ENCODE measurements at regions of chr3 and their contacts with region 1.

Region 1: GRCh38 chr3:179653096-179653797 is 407 bp downstream of the USP13 start:
- DNase-seq: peak; percentile 78 to 87
- ATAC-seq: peak; percentile 65 to 69
- H3K4me3 ChIP-seq: peak overlapping the region; percentile 77 to 98 (median 87)
- H3K27ac ChIP-seq: peak overlapping the region; percentile 90 to 98 (median 96)
- H3K4me1 ChIP-seq: peaks cover 22 to 25% of the 10 kb centered on the region in 2 donors
- H3K27me3 ChIP-seq: no peaks in the 10 kb centered on the region
- CTCF ChIP-seq: no peak
- POLR2A ChIP-seq: peak; percentile 52 to 58

Region 2: DNA sequence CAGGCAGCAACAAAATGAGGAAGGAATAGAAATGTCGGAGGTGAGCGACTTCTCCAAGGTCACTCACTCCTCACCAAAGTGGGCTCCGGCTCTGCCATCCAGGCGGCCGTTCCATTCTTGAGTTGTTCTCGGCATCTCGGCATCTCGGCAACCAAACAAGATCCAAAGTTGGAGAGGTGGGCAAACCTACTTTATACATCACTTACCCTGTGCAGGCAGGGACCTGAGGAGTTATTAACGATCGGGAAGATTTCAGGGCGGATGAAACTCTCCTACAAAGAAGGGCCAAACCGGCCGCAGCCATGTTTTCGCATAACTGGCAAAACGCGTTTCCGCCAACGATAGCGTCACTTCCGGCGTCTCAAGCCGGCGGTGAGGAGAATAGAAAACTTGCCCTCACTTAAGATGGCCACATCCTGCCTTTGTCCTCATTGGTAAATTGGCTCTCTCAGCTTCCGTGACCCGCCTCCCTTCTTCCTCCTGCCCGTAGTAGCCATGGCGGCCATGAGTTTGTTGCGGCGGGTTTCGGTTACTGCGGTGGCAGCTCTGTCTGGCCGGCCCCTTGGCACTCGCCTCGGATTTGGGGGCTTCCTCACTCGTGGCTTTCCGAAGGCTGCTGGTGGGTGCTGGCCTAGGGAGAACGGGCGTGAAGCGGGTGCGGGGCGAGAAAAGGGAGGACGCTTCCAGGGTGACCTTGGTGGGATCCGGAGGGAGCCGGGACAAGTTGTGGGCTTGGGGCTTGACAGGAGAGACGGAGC is 48.7 kb before region 1 on chr3 and contains the starts of genes MRPL47 and NDUFB5:
- in situ Hi-C with region 1: no loop called
- intact Hi-C with region 1: loop called (anchors 2 kb)
- DNase-seq: peak; percentile 93 to 94
- ATAC-seq: peak; percentile 100
- H3K4me3 ChIP-seq: peak within 1 kb of the TSS; percentile 84 to 94 (median 88)
- H3K27ac ChIP-seq: peak within 1 kb of the TSS; percentile 90 to 97 (median 92)
- H3K4me1 ChIP-seq: peaks cover 30 to 40% of the 10 kb centered on the region in 2 donors
- H3K27me3 ChIP-seq: no peaks in the 10 kb centered on the region
- CTCF ChIP-seq: no peak
- POLR2A ChIP-seq: peak; percentile 80 to 88
- total RNA-seq, gene MRPL47: 34.9 to 74.0 (median 41.2) TPM
- total RNA-seq, gene NDUFB5: 127 to 348 (median 179) TPM

Region 3: DNA sequence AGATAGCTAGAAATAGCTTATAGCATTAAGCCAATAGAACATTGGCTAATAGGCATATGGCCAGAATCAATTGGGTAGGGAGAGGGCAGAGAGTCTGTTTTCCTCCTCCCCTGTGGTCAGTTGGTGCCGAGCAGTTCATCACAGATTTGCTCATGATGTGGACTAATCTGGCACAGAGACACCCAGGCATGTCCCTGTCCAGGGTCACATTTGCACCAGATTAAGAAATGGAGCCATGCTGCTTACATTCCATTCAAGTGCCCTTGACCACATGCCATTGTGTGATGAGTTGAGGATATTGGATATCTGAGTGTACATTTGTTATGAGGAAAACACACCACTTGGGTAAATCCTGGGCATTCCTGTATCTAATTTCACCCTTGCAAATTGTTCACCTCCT is 53.0 kb after region 1 on chr3:
- in situ Hi-C with region 1: no loop called
- intact Hi-C with region 1: loop called (anchors 2 kb)
- DNase-seq: peak; percentile 84 to 87
- ATAC-seq: peak; percentile 91 to 93
- H3K4me3 ChIP-seq: no peak overlapping the region
- H3K27ac ChIP-seq: peak overlapping the region; percentile 85 to 90 (median 86)
- H3K4me1 ChIP-seq: peaks cover 65 to 77% of the 10 kb centered on the region in 2 donors
- H3K27me3 ChIP-seq: no peaks in the 10 kb centered on the region
- CTCF ChIP-seq: peak in 1 of 5 experiments; percentile 17
- POLR2A ChIP-seq: no peak

Region 4: GRCh38 chr3:179732661-179733348 is 79.6 kb after region 1 on chr3:
- in situ Hi-C with region 1: no loop called
- intact Hi-C with region 1: loop called (anchors 1 kb)
- DNase-seq: peak; percentile 84 to 94
- ATAC-seq: peak; percentile 56 to 64
- H3K4me3 ChIP-seq: no peak overlapping the region
- H3K27ac ChIP-seq: peak overlapping the region; percentile 88 to 96 (median 94)
- H3K4me1 ChIP-seq: peaks cover 61% of the 10 kb centered on the region in 2 donors
- H3K27me3 ChIP-seq: no peaks in the 10 kb centered on the region
- CTCF ChIP-seq: no peak
- POLR2A ChIP-seq: no peak

Region 5: GRCh38 chr3:179743913-179744312 is 90.7 kb after region 1 on chr3:
- in situ Hi-C with region 1: loop called in 1 of 4 experiments (anchors 10 kb)
- intact Hi-C with region 1: no loop called
- DNase-seq: no peak
- ATAC-seq: peak; percentile 29 to 52
- H3K4me3 ChIP-seq: no peak overlapping the region
- H3K27ac ChIP-seq: peak overlapping the region; percentile 1 to 51 (median 39)
- H3K4me1 ChIP-seq: no peaks in the 10 kb centered on the region
- H3K27me3 ChIP-seq: no peaks in the 10 kb centered on the region
- CTCF ChIP-seq: no peak
- POLR2A ChIP-seq: no peak

Region 6: GRCh38 chr3:179801263-179801662 is 148.0 kb after region 1 on chr3:
- in situ Hi-C with region 1: no loop called
- intact Hi-C with region 1: loop called (anchors 10 kb)
- DNase-seq: no peak
- ATAC-seq: peak; percentile 28 to 40
- H3K4me3 ChIP-seq: no peak overlapping the region
- H3K27ac ChIP-seq: no peak overlapping the region
- H3K4me1 ChIP-seq: no peaks in the 10 kb centered on the region
- H3K27me3 ChIP-seq: no peaks in the 10 kb centered on the region
- CTCF ChIP-seq: no peak
- POLR2A ChIP-seq: no peak

Measured in gastrocnemius medialis (tissue), 4 donors.